A673 (cell line): ENCODE measurements at regions of chrX and their contacts with region 1.

Region 1: GRCh38 chrX:2811271-2811670 is 17.5 kb upstream of the GYG2 start:
- DNase-seq: no peak
- H3K4me3 ChIP-seq: no peak overlapping the region
- H3K27ac ChIP-seq: peak overlapping the region; percentile 87
- H3K4me1 ChIP-seq: peaks cover 44% of the 10 kb centered on the region
- H3K27me3 ChIP-seq: no peaks in the 10 kb centered on the region
- CTCF ChIP-seq: no peak

Region 2: DNA sequence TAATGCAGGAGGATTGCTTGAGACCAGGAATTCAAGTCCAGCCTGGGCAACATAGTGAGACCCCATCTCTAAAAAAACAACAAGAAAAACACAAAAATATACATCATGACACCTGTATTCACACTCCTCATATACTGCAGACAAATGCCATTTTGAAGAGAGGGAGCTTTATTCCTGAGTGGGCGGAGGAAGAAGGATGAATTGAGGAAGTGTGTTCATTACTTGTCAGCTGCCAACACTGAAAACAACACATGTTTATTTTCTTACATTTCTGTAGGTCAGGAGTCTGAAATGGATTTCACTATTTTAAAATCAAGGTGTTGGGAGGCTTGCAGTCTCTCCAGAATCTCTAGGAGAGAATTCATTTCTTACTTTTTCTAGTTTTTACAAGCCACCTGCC is 167.4 kb before region 1 on chrX:
- CTCF ChIA-PET with region 1: no interaction called
- POLR2A ChIA-PET with region 1: no interaction called
- intact Hi-C with region 1: loop called (anchors 1 kb)
- DNase-seq: no peak
- H3K4me3 ChIP-seq: no peak overlapping the region
- H3K27ac ChIP-seq: no peak overlapping the region
- H3K4me1 ChIP-seq: no peaks in the 10 kb centered on the region
- H3K27me3 ChIP-seq: no peaks in the 10 kb centered on the region
- CTCF ChIP-seq: no peak

Region 3: GRCh38 chrX:2707334-2707760 is 103.9 kb before region 1 on chrX:
- CTCF ChIA-PET with region 1: no interaction called
- POLR2A ChIA-PET with region 1: no interaction called
- intact Hi-C with region 1: loop called (anchors 2 kb)
- DNase-seq: peak; percentile 99
- H3K4me3 ChIP-seq: peak overlapping the region; percentile 10
- H3K27ac ChIP-seq: peak overlapping the region; percentile 92
- H3K4me1 ChIP-seq: peaks cover 91% of the 10 kb centered on the region
- H3K27me3 ChIP-seq: no peaks in the 10 kb centered on the region
- CTCF ChIP-seq: 0 out of 2 replicates have a peak, but pooled peaks have one; percentile 10